MCF 10A (cell line): ENCODE measurements at regions of chr7 and their contacts with region 1.

Region 1: DNA sequence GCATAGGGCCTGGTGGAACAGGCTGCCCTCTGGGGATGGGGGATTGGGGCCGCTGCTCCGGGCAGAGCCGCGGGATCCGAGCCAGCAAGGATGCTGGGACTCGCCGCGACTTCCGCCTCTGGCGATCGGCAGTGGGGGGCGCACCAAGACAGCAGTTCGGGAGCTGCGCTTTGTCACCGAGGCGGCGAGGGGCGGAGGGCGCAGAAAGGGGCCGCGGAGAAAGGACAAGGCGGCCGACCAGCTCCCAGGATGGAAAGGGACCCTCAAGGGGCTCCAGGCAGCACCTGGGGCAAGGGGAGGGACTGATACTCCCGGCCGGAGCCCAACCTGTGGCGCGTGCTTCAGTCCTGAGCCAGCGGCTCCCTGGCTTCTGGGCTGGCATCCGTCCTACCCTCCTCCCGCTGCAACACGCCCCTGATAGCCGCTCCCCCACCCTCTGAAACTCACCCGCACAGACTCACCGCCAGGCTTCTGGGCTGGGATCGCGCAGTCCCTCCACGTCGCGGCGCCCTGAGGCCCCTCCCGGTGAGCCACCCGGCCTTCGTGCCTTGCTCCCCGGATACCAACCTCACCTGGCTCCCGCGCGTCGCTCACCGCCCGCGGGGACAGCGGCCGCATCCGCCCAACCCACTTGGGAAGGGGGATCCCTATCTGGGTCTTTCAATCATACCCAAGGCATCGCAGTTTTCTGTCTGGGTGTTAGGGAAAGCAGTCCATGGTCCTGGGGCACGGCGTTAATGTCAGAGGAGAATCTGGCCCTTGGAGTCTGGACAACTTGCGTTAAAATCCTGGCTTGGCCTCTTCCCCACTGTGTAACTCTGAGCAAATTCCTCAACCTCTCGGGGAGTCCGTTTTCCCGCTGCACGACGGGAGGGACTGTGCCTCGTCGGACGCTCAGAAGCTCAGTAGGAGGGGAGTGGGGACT is 7.0 kb upstream of the EVX1 start:
- DNase-seq: peak; percentile 46
- H3K4me3 Mint-ChIP-seq: peak overlapping the region; percentile 74
- H3K27ac Mint-ChIP-seq: no peak overlapping the region
- H3K4me1 Mint-ChIP-seq: no peaks in the 10 kb centered on the region
- H3K27me3 Mint-ChIP-seq: peaks cover 10% of the 10 kb centered on the region
- CTCF ChIP-seq: peak; percentile 44

Region 2: DNA sequence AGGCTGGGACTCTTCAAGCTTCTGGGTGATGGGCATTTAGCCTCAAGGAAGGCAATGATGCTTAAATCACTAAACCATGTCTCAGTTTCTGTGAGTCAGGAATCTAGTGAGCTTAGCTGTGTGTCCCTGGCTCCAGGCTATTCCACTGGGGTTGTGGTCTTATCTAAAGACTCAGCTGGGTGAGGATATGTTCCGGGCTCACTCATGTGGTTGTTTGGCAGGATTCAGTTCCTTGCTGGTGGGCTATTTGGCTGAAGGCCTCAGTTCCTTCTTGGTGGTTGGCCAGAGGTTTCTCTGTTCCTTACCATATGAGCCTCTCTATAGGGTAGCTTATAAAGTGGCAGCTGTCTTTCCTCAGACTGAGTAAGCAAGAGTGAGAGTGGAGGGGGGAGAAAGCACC is 19.0 kb after region 1 on chr7:
- CTCF ChIA-PET with region 1: no interaction called
- POLR2A ChIA-PET with region 1: no interaction called
- intact Hi-C with region 1: no loop called
- DNase-seq: no peak
- H3K4me3 Mint-ChIP-seq: no peak overlapping the region
- H3K27ac Mint-ChIP-seq: no peak overlapping the region
- H3K4me1 Mint-ChIP-seq: no peaks in the 10 kb centered on the region
- H3K27me3 Mint-ChIP-seq: no peaks in the 10 kb centered on the region
- CTCF ChIP-seq: no peak

Region 3: DNA sequence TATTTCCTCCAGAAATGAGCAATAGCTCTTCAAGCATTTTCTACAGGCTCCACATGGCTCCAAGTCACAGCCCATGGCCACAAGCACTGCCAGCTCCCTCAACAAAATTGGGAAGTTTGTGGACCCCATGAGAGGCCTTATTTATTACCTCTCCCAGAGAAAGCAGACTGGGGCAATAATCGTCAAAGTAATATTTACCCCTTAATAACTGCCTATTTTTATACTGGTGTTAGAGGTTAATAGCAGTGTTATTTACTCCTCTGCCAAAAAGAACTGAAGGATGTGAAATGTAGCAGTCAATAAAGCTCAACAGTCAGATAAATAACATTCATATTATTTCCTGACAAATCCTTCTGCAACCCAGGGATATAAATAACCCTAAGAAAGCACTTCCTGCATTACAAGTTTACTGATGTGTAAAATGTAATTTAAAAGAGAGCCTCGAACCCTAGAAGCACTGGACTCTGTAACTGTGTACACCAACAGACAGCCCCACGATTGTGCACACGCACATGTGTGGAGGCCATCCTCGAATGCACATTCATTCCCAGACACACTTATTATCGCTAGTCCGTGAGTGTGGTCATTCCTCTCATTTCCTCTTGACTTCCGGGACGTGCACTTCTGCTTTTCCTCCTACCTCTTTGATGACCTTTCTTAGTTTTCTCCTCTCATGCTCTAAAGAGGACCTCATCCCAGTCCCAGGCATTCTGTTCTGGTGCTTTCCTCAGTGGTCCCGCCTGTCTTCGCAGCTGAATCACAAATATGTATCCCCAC is 164.3 kb after region 1 on chr7:
- CTCF ChIA-PET with region 1: no interaction called
- POLR2A ChIA-PET with region 1: no interaction called
- intact Hi-C with region 1: no loop called
- DNase-seq: no peak
- H3K4me3 Mint-ChIP-seq: no peak overlapping the region
- H3K27ac Mint-ChIP-seq: no peak overlapping the region
- H3K4me1 Mint-ChIP-seq: no peaks in the 10 kb centered on the region
- H3K27me3 Mint-ChIP-seq: no peaks in the 10 kb centered on the region
- CTCF ChIP-seq: no peak

Region 4: GRCh38 chr7:27576360-27576944 is 340.8 kb after region 1 on chr7:
- CTCF ChIA-PET with region 1: interaction called, 4 read pairs
- POLR2A ChIA-PET with region 1: no interaction called
- intact Hi-C with region 1: loop called (anchors 1 kb)
- DNase-seq: peak; percentile 63
- H3K4me3 Mint-ChIP-seq: no peak overlapping the region
- H3K27ac Mint-ChIP-seq: no peak overlapping the region
- H3K4me1 Mint-ChIP-seq: peaks cover 5% of the 10 kb centered on the region
- H3K27me3 Mint-ChIP-seq: no peaks in the 10 kb centered on the region
- CTCF ChIP-seq: peak; percentile 44

Region 5: GRCh38 chr7:27605689-27606269 is 370.1 kb after region 1 on chr7:
- CTCF ChIA-PET with region 1: interaction called, 5 read pairs
- POLR2A ChIA-PET with region 1: no interaction called
- intact Hi-C with region 1: loop called (anchors 1 kb)
- DNase-seq: peak; percentile 38
- H3K4me3 Mint-ChIP-seq: no peak overlapping the region
- H3K27ac Mint-ChIP-seq: no peak overlapping the region
- H3K4me1 Mint-ChIP-seq: peaks cover 13% of the 10 kb centered on the region
- H3K27me3 Mint-ChIP-seq: no peaks in the 10 kb centered on the region
- CTCF ChIP-seq: peak; percentile 27